Posterior vena cava (tissue), 2 donors: ENCODE measurements at regions of chr16 and their contacts with region 1.

Region 1: DNA sequence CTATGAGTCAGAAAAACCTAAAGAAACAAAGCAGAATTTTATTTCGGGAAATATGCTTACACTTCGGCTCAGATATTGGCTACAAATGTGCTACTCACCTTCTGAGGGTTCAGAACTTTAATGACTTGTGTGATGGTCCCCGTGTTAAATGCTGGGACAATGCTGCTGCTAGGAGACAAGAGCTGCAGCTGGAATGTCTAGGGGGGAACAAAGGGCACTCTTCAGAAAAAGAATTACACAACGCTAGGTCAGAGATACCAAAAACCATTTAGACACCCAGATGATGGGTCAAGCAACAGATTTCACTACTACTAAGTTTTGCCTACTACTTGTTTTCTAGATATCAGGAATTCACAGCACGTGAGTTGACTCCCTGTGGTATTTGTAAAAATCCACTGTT is 10.0 kb upstream of the PHLPP2 start:
- DNase-seq: no peak

Region 2: GRCh38 chr16:71669932-71670536 is 64.5 kb before region 1 on chr16:
- intact Hi-C with region 1: loop called in 1 of 2 experiments (anchors 10 kb)
- DNase-seq: no peak